ENCODE measurements at regions of chr9 and their contacts with region 1.

Region 1: GRCh38 chr9:86983260-86984255 is 36.3 kb upstream of the GAS1 start:
- DNase-seq: peak; percentile 99
- ATAC-seq: peak; percentile 81
- H3K4me3 ChIP-seq: no peak overlapping the region; the same call in 1 of the 2 replicates
- H3K27ac ChIP-seq: peak overlapping the region; percentile 99
- H3K4me1 ChIP-seq: peaks cover 23% of the 10 kb centered on the region
- H3K27me3 ChIP-seq: no peaks in the 10 kb centered on the region
- CTCF ChIP-seq: no peak
- POLR2A ChIP-seq: no peak
- RAD21 ChIP-seq: no peak

Region 2: GRCh38 chr9:87107072-87107471 is 123.5 kb after region 1 on chr9:
- CTCF ChIA-PET with region 1: no interaction called
- POLR2A ChIA-PET with region 1: no interaction called
- dilution Hi-C with region 1: no loop called
- in situ Hi-C with region 1: no loop called
- intact Hi-C with region 1: loop called (anchors 5 kb)
- DNase-seq: peak; percentile 29
- ATAC-seq: no peak
- H3K4me3 ChIP-seq: no peak overlapping the region
- H3K27ac ChIP-seq: no peak overlapping the region
- H3K4me1 ChIP-seq: peaks cover 18% of the 10 kb centered on the region
- H3K27me3 ChIP-seq: no peaks in the 10 kb centered on the region
- CTCF ChIP-seq: no peak
- POLR2A ChIP-seq: no peak
- RAD21 ChIP-seq: no peak